Activated T-helper 2 cell treated with anti-CD3 and anti-CD28 coated beads, Interferon-gamma antibody, Interleukin-2, Interleukin-4, amounts not matched to agents 10 μg/mL and 5 μg/mL and 100 μg/mL, durations not matched to agents 14 hours and 24 hours and 36 hours (primary cell): ENCODE measurements at regions of chr11 and their contacts with region 1.

Region 1: GRCh38 chr11:118435893-118436624 is at the start of gene KMT2A:
- DNase-seq: peak; percentile 94
- H3K4me3 Mint-ChIP-seq: peak within 1 kb of the TSS; percentile 93
- H3K27ac Mint-ChIP-seq: peak within 1 kb of the TSS; percentile 89
- H3K4me1 Mint-ChIP-seq: peaks cover 39% of the 10 kb centered on the region
- H3K27me3 Mint-ChIP-seq: peaks cover 7% of the 10 kb centered on the region
- total RNA-seq, gene KMT2A: 61.6 and 64.2 TPM in 2 replicates

Region 2: GRCh38 chr11:118338637-118339061 is 97.4 kb before region 1 on chr11:
- intact Hi-C with region 1: loop called (anchors 5 kb)
- DNase-seq: peak; percentile 88
- H3K4me3 Mint-ChIP-seq: peak overlapping the region; percentile 86
- H3K27ac Mint-ChIP-seq: peak overlapping the region; percentile 100
- H3K4me1 Mint-ChIP-seq: peaks cover 56% of the 10 kb centered on the region
- H3K27me3 Mint-ChIP-seq: no peaks in the 10 kb centered on the region

Region 3: GRCh38 chr11:118415739-118416284 is 20.2 kb before region 1 on chr11:
- intact Hi-C with region 1: loop called (anchors 2 kb)
- DNase-seq: peak; percentile 32
- H3K4me3 Mint-ChIP-seq: no peak overlapping the region
- H3K27ac Mint-ChIP-seq: no peak overlapping the region
- H3K4me1 Mint-ChIP-seq: peaks cover 3% of the 10 kb centered on the region
- H3K27me3 Mint-ChIP-seq: no peaks in the 10 kb centered on the region

Region 4: DNA sequence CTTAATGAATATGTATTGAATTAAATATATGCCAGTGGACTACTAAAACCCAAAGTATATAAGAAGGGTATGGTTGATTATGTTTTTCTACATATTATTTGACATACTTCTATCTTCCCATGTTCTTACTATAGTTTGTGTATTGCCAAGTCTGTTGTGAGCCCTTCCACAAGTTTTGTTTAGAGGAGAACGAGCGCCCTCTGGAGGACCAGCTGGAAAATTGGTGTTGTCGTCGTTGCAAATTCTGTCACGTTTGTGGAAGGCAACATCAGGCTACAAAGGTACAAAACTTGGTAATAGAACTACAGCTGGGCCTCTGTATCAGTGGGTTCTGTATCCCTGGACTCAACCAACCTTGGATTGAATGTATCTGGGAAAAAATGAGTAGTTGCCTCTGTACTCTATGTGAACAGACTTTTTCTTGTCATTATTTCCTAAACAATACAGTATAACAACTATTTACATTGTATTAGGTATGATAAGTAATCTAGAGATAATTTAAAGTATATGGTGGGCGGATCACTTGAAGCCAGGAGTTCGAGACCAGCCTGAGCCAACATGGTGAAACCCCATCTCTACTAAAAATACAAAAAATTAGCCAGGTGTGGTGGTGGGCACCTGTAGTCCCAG is 52.5 kb after region 1 on chr11:
- intact Hi-C with region 1: loop called (anchors 1 kb)
- DNase-seq: peak; percentile 67
- H3K4me3 Mint-ChIP-seq: no peak overlapping the region
- H3K27ac Mint-ChIP-seq: peak overlapping the region; percentile 18
- H3K4me1 Mint-ChIP-seq: peaks cover 5% of the 10 kb centered on the region
- H3K27me3 Mint-ChIP-seq: no peaks in the 10 kb centered on the region